IMR-90 (cell line): ENCODE measurements at regions of chr11 and their contacts with region 1.

Region 1: GRCh38 chr11:65003282-65003681 is 6.5 kb upstream of the BATF2 start:
- DNase-seq: peak; percentile 66
- ATAC-seq: peak; percentile 55
- H3K4me3 ChIP-seq: no peak overlapping the region
- H3K27ac ChIP-seq: no peak overlapping the region
- H3K4me1 ChIP-seq: peaks cover 5% of the 10 kb centered on the region; the same call in 1 of the 2 replicates
- H3K27me3 ChIP-seq: no peaks in the 10 kb centered on the region
- CTCF ChIP-seq: no peak
- POLR2A ChIP-seq: no peak
- RAD21 ChIP-seq: no peak

Region 2: DNA sequence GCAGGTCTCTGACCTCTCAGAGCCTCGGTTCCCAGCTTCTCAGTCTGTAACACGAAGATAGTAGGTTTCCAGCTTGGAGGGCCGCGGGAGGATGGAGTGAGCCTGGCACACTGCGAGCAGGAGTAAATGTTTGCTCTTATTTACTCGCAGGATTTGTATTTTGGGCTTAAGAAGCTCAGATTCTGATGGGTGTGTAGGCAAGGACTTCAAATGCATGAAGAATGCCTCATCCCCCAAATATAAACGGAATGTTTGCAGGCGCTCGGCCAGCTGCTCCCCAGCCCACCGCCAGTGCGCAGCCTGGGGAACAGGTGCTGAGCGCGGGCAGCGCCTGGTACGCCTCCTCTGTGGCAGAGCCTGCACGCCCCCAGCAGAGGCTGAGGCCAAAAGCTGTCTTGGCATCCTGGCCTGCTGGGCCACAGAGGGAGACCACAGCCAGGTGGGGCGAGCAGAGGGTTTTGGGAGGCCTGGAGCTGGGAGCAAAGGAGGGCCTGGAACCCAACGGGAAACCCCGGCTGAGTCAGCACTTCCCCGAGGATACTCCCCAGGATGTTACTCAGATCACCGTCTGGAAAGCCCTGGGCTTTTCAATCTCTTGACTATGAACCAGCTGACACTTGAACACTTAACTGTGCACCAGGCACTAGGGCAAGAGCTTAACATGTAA is 134.2 kb before region 1 on chr11:
- CTCF ChIA-PET with region 1: no interaction called
- POLR2A ChIA-PET with region 1: no interaction called
- dilution Hi-C with region 1: no loop called
- in situ Hi-C with region 1: no loop called
- intact Hi-C with region 1: no loop called
- DNase-seq: peak; percentile 94
- ATAC-seq: peak; percentile 52
- H3K4me3 ChIP-seq: no peak overlapping the region
- H3K27ac ChIP-seq: peak overlapping the region; percentile 67
- H3K4me1 ChIP-seq: peaks cover 50% of the 10 kb centered on the region
- H3K27me3 ChIP-seq: no peaks in the 10 kb centered on the region
- CTCF ChIP-seq: no peak
- POLR2A ChIP-seq: no peak
- RAD21 ChIP-seq: 0 out of 2 replicates have a peak, but pooled peaks have one; percentile 2

Region 3: DNA sequence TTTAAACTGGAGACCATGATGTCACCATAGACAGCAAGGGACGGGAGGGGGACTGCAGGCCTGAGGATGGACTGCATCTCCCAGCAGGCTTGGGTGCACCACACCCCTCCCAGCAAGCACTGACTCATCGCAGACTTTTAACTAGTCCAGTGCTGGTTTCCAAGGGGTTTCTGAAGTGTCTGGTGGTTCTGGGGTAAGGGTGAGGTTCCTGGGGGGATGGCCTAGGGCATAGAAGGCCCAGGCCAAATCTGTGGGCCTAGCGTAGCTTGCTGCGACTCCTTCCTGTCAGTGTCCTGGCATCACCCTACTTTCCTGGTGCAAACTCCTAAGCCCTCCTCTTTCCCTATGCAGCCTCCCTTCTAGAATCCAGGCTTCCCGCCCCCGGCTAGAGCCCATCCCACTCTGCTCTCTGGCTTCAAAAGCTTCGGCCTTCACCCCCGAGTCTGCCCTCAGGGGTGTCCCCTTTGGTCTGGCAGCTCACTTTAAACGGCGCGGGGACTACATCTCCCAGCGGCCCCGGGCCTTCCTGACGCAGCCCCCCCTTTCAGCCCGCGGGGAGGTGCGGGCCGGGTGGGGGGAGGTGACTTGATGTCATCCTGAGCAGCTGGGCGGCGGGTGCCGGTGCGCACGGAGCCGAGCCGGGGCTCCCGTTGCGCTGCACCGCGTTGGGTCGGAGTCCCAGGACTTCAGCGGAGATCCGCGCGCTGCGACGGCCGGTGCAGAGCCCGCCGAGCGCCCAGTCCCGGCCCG is 79.0 kb before region 1 on chr11 and contains the start of gene PPP2R5B:
- CTCF ChIA-PET with region 1: no interaction called
- POLR2A ChIA-PET with region 1: no interaction called
- dilution Hi-C with region 1: no loop called
- in situ Hi-C with region 1: loop called (anchors 5 kb)
- intact Hi-C with region 1: loop called (anchors 2 kb)
- DNase-seq: peak; percentile 94
- ATAC-seq: peak; percentile 97
- H3K4me3 ChIP-seq: peak within 1 kb of the TSS; percentile 83
- H3K27ac ChIP-seq: peak within 1 kb of the TSS; percentile 83
- H3K4me1 ChIP-seq: peaks cover 7% of the 10 kb centered on the region
- H3K27me3 ChIP-seq: no peaks in the 10 kb centered on the region
- CTCF ChIP-seq: no peak
- POLR2A ChIP-seq: peak; percentile 70
- RAD21 ChIP-seq: 0 out of 2 replicates have a peak, but pooled peaks have one; percentile 8
- total RNA-seq, gene PPP2R5B: 6.4 and 6.5 TPM in 2 replicates